Prostate gland (tissue), 2 donors: ENCODE measurements at regions of chr1 and their contacts with region 1.

Region 1: GRCh38 chr1:203504397-203505250 is 10.7 kb downstream of the OPTC start:
- DNase-seq: peak; percentile 83
- H3K4me3 ChIP-seq: no peak overlapping the region
- H3K27ac ChIP-seq: no peak overlapping the region
- H3K4me1 ChIP-seq: no peaks in the 10 kb centered on the region
- H3K27me3 ChIP-seq: no peaks in the 10 kb centered on the region
- CTCF ChIP-seq: peak; percentile 36 to 94 (median 88)
- POLR2A ChIP-seq: no peak

Region 2: GRCh38 chr1:203702130-203702577 is 197.5 kb after region 1 on chr1:
- intact Hi-C with region 1: loop called (anchors 2 kb)
- DNase-seq: peak; percentile 20
- H3K4me3 ChIP-seq: no peak overlapping the region
- H3K27ac ChIP-seq: no peak overlapping the region
- H3K4me1 ChIP-seq: no peaks in the 10 kb centered on the region
- H3K27me3 ChIP-seq: no peaks in the 10 kb centered on the region
- CTCF ChIP-seq: peak; percentile 61 to 91 (median 88)
- POLR2A ChIP-seq: no peak